Colonic mucosa (tissue), 4 donors: ENCODE measurements at regions of chr6 and their contacts with region 1.

Region 1: GRCh38 chr6:149431905-149432775 is 32.1 kb downstream of the SUMO4 start:
- DNase-seq: peak; percentile 94
- H3K4me3 ChIP-seq: no peak overlapping the region
- H3K27ac ChIP-seq: no peak overlapping the region
- H3K4me1 ChIP-seq: no peaks in the 10 kb centered on the region
- H3K27me3 ChIP-seq: no peaks in the 10 kb centered on the region
- CTCF ChIP-seq: peak; percentile 93

Region 2: GRCh38 chr6:149028767-149029405 is 403.3 kb before region 1 on chr6:
- intact Hi-C with region 1: loop called (anchors 5 kb)
- DNase-seq: peak; percentile 76
- H3K4me3 ChIP-seq: no peak overlapping the region
- H3K27ac ChIP-seq: no peak overlapping the region
- H3K4me1 ChIP-seq: no peaks in the 10 kb centered on the region
- H3K27me3 ChIP-seq: no peaks in the 10 kb centered on the region
- CTCF ChIP-seq: peak; percentile 37

Region 3: GRCh38 chr6:149190224-149190831 is 241.8 kb before region 1 on chr6:
- intact Hi-C with region 1: loop called (anchors 5 kb)
- DNase-seq: peak; percentile 81
- H3K4me3 ChIP-seq: no peak overlapping the region
- H3K27ac ChIP-seq: no peak overlapping the region
- H3K4me1 ChIP-seq: no peaks in the 10 kb centered on the region
- H3K27me3 ChIP-seq: no peaks in the 10 kb centered on the region
- CTCF ChIP-seq: no peak

Region 4: DNA sequence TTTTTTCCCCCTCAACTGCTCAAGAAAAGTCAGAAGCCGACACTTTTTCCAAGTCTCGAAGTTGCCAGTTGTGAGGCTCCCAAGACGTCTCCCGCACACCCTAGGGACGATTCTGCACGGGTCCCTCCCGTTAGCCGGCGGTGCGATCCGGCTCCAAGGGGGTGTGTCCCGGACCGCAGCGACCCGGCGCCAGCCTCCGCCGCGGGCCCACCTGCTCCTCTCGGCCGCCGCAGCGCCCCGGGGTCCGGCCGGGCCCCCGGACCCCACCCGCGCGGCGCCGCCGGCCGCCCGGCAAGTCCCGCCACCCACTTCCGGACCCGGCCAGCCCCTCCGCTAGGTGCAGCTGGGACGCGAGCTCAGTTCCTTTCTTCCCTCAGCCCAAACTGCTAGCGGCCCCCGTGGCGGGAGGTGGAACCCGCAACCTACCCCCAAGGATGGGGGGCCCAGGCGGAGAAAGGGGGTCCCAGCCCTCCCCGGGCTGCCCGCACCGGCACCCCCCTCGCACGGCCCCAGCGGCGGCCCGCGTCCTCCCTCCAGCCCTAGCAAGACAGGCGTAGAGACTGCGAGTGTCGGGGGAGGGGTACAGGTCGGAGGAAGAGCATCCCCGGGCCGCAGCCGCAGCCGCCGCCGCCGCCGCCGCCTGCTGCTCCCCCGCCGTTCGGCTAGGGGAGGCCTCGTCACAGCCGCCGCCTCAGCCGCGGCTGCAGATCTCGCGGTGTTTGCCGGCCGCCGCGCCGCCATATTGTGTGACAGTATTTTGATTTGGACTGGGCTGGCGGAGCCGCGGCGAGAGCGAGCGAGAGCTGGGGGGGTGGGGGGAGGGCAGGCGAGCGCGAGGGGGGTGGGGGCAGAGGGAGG is 115.1 kb before region 1 on chr6:
- intact Hi-C with region 1: no loop called
- DNase-seq: peak; percentile 85
- H3K4me3 ChIP-seq: peak overlapping the region; percentile 87
- H3K27ac ChIP-seq: peak overlapping the region; percentile 96
- H3K4me1 ChIP-seq: peaks cover 5% of the 10 kb centered on the region
- H3K27me3 ChIP-seq: no peaks in the 10 kb centered on the region
- CTCF ChIP-seq: no peak

Region 5: DNA sequence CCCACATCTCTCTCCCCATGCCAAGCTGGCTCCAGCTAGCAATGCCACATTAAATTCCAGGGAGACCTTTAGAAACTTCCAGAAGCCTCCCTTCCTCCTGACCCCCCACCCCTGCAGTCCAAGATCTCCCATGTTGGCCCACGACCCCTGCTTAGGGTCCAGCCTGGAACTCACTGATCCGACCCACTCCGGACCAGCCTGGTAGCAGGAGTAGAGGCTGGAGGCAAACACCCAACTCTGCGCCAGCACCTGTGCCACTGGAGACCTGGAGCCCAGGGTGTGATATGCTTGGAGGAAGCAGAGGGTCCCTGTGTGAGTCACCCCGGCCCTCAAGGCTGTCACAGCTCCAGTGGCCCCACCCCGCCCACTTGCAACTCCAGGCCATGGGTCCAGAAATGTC is 528.3 kb after region 1 on chr6:
- intact Hi-C with region 1: no loop called
- DNase-seq: no peak
- H3K4me3 ChIP-seq: no peak overlapping the region
- H3K27ac ChIP-seq: no peak overlapping the region
- H3K4me1 ChIP-seq: no peaks in the 10 kb centered on the region
- H3K27me3 ChIP-seq: peaks cover 55% of the 10 kb centered on the region
- CTCF ChIP-seq: no peak